Vagina (tissue), 2 donors: ENCODE measurements at regions of chr2 and their contacts with region 1.

Region 1: GRCh38 chr2:3423492-3424175 is 44.1 kb downstream of the TRAPPC12 start:
- DNase-seq: peak in 1 of 2 donors; percentile 74
- H3K4me3 ChIP-seq: no peak overlapping the region
- H3K27ac ChIP-seq: no peak overlapping the region
- H3K4me1 ChIP-seq: no peaks in the 10 kb centered on the region
- H3K27me3 ChIP-seq: no peaks in the 10 kb centered on the region
- CTCF ChIP-seq: peak; percentile 88 to 96 (median 88)
- POLR2A ChIP-seq: no peak

Region 2: GRCh38 chr2:3651691-3652648 is 228.3 kb after region 1 on chr2:
- intact Hi-C with region 1: loop called (anchors 10 kb)
- DNase-seq: no peak
- H3K4me3 ChIP-seq: peak overlapping the region; percentile 25 to 34
- H3K27ac ChIP-seq: no peak overlapping the region
- H3K4me1 ChIP-seq: peaks cover 4% of the 10 kb centered on the region
- H3K27me3 ChIP-seq: no peaks in the 10 kb centered on the region
- CTCF ChIP-seq: no peak
- POLR2A ChIP-seq: no peak